ENCODE measurements at regions of chr6 and their contacts with region 1.

Region 1: DNA sequence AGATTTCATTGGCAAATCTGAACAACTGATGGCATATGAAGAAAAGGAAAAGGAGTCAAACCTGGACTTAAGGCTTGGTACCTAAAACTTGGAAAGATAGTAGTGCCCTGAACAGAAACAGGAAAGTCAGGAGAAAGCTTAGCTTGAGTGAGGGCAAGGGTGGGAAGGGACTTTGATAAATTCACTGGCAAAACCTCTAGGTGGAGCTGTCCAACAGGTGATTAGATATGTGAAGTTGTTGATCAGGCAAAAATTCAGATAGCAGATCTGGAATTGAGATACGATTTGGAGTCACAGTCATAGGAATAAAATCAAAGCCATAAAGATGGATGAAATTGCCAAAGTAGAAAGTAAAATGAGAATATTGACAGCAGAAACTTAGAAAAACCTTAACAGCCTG is 16.1 kb upstream of the ZNF292 start:
- DNase-seq: no peak
- ATAC-seq: peak; percentile 83

Region 2: DNA sequence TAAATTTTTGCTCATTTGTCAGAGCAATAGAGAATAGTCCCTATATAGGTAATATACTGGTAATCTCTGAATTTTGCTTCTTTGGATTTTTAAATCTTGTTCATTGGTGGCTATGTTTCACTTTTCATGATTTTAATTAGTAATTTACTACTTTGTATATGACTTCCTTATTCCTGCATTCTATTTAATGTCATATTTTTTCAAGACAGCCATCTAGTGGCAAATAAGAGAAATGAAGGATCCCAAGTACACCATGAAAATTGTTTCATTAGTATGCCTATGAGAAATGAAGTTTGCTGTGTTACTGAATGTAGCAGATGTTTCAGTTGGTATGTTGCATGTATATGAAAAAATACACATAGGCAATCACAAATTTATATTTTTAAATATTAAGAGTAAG is 98.6 kb after region 1 on chr6:
- intact Hi-C with region 1: loop called in 1 of 2 experiments (anchors 10 kb)
- DNase-seq: no peak
- ATAC-seq: peak; percentile 52

Measured in left colon (tissue), 2 donors.